ENCODE measurements at regions of chr16 and their contacts with region 1.

Region 1: DNA sequence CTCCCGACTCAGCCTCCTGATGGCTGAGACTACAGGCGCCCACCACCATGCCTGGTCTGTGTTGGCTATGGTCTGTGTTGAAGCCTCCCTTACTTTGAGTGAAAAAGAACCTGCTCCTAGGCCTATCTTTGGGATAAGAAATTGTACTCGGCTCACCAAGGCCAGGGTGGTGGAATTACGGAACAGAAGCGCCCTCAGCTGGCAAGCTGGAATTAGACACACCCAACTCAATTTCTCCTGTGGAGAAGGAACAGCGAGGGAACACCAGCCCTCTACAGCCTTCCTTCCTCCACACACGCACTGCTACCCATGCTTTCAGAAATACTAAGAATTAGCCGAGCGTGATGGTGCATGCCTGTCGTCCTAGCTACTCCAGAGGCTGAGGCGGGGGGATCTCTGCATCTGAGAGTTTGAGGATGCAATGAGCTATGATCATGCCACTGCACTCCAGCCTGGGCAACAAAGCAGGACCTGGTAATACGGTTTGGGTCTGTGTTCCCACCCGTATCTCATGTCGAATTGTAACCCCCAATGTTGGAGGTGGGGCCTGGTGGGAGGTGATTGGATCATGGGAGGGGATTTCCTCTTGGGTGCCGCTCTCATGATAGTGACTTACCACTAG is 40.1 kb upstream of the RBBP6 start:
- DNase-seq: no peak
- ATAC-seq: peak; percentile 71
- H3K4me3 ChIP-seq: no peak overlapping the region
- H3K27ac ChIP-seq: no peak overlapping the region
- H3K4me1 ChIP-seq: no peaks in the 10 kb centered on the region; the same call in 1 of the 2 replicates
- H3K27me3 ChIP-seq: no peaks in the 10 kb centered on the region
- CTCF ChIP-seq: peak; percentile 41 to 65 (median 52); a peak in 5 of 6 replicates
- EP300 ChIP-seq: no peak
- POLR2A ChIP-seq: no peak
- RAD21 ChIP-seq: peak; percentile 63

Region 2: GRCh38 chr16:24414534-24414933 is 84.8 kb before region 1 on chr16:
- CTCF ChIA-PET with region 1: interaction called, 3 read pairs
- POLR2A ChIA-PET with region 1: no interaction called
- RAD21 ChIA-PET with region 1: no interaction called
- SMC1A ChIA-PET with region 1: no interaction called
- in situ Hi-C with region 1: loop called (anchors 5 kb)
- intact Hi-C with region 1: loop called (anchors 5 kb)
- DNase-seq: no peak
- ATAC-seq: no peak
- H3K4me3 ChIP-seq: no peak overlapping the region
- H3K27ac ChIP-seq: no peak overlapping the region
- H3K4me1 ChIP-seq: no peaks in the 10 kb centered on the region
- H3K27me3 ChIP-seq: no peaks in the 10 kb centered on the region
- CTCF ChIP-seq: no peak
- EP300 ChIP-seq: no peak
- POLR2A ChIP-seq: no peak
- RAD21 ChIP-seq: no peak

Measured in GM12878 (cell line).